Cardiac septum (tissue), 1 donor: ENCODE measurements at regions of chr12 and their contacts with region 1.

Region 1: DNA sequence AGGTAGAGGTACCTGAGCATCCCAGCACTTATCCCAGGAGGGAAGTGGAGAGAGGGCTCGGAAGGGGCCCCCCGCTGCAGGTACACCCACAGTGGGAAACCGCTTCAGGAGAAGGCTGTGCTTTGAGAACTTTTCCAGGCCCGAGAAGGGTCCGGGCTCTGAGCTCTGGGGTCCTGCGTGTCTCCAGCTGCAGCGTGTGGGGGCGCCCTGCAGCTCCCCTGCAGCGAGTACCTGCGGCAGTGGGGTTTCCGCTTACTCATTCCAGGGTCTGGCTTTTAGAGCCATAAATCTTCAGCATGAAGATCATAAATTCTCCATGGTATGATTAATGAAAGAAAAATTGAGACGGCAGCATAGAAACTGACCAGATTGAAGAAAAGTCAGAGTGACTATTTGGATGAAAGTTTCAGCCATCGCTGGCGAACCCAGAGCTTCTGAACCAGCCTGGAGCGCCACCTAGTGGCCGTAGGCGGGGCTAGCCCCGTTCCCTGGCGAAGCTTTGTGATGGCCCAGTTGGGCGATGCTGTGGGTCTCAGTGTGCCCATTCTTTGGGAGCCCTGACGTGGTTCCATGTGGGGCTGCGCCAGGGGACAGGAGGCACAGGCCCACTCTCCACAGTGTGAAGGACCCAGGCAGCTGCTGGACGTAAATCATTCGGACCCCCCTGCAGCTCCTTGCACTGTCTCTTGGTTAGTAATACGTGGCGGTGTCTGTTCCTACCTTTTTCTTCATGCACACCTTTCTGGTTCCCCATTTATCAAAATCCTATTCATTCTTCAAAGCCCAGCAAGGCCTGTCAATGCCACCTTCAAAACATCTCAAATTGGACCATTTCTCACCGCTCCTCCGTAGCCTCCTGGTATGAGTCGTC is 198.2 kb downstream of the TSPAN9 start:
- DNase-seq: peak; percentile 88

Region 2: DNA sequence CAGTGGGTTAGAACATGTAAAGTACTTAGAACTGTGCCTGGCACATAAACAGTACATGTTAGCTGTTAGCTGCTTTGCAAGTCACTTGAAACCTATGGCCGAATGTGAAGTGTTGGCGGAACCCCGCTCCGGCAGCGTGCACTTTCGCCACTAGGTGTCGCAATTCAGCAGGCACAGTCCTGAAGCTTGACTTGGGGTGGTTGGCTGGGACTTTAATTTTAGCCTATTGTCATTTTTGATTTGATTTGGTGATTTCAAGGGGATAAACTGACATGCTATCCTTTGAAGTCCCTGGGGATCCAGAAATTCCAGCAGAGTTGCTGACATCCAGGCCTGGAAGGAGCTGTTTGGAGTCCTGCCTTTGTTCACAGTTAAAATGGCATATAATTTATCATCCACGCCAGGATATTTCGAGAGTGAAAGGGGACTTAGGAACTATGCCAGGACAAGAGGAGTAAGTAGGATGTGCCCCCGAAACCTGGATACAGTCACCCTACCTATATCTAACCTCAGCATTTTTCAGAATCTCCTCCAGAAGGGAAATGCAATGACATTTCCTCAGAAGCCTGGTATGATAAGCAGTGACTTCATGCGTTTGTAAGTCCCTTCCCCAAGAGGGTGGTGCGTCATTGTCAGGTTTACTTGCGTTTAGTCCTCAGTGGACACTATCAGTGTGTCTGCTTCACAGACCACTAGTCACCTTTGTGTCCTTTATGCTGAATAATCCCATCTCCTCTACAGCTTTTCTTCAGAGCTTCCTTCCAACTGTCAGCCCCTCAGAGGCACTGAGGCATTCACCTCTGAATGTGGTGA is 201.8 kb before region 1 on chr12:
- intact Hi-C with region 1: loop called (anchors 1 kb)
- DNase-seq: peak; percentile 89

Region 3: GRCh38 chr12:3135522-3136461 is 139.6 kb before region 1 on chr12:
- intact Hi-C with region 1: loop called (anchors 1 kb)
- DNase-seq: no peak

Region 4: DNA sequence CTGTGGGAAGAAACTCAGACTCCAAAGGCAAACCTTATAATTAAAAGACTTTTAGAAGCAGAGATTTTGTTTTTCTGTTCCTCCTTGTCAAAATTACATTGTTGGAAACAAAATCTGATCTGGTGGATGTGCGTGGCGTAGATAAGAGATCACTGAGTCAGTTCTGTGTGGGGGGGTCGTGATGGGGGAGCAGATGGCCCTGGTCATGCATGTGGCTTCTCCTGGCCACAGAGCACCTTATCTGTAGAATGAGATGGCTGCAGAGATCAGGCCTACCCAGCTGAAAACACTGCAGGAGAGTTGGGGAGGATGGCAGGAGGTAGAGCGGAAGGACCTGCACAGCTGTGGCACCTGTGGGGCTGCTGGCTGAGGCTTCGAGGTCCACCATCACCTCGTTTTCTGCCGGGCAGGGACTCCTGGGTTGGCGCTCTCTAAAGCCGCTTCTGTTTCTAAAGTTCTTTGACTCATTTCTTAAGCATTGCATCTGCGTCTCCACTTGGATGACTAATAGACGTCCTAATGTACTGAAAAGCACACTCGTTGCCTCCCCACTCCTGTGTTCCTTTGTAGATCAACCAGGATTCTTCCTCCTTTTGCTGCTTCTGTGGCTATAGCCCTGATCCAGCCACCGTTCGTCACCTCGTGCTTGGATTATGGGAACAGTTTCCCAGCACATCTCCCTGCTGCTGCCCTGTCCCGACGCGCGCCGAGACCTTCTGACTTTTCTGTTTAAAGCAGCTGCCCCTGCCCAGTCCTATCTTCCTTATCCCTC is 104.8 kb before region 1 on chr12:
- intact Hi-C with region 1: no loop called
- DNase-seq: no peak

Region 5: GRCh38 chr12:3218228-3219171 is 56.9 kb before region 1 on chr12:
- intact Hi-C with region 1: no loop called
- DNase-seq: no peak

Region 6: DNA sequence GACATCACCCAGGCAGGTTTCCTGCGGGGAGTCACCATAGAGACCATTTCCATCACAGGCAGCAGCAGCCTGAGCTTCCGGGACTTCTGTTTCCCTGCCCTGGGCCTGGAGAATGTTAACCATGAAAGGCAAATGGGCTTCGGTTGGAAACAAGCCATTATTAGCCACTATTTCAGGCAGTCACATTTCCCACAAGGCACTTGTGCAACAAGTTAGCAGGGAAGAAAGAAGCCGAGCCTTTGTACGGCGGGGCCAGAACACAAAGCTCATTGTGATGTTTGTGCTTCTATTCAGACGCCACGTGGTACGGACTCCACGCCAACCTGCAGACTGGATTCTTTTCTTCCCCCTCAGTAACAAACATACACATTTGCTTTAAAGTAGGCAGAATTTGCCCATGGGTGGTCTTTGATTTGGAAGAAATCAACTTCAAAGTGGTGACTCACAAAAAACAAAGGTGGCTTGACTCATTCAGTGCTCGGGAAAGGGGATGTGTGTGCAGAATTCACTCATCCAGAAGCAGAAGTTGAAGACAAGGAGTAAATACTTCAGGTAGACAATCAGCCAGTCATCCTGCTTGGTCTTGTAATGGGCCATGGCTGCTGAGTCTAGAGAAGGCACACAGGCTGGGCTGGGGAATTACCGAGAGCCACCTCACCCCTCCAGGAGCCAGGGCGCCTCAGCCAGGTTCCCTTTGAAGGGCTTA is 61.4 kb after region 1 on chr12:
- intact Hi-C with region 1: no loop called
- DNase-seq: peak; percentile 81